Left ventricle myocardium inferior (tissue), 1 donor: ENCODE measurements at regions of chr10 and their contacts with region 1.

Region 1: DNA sequence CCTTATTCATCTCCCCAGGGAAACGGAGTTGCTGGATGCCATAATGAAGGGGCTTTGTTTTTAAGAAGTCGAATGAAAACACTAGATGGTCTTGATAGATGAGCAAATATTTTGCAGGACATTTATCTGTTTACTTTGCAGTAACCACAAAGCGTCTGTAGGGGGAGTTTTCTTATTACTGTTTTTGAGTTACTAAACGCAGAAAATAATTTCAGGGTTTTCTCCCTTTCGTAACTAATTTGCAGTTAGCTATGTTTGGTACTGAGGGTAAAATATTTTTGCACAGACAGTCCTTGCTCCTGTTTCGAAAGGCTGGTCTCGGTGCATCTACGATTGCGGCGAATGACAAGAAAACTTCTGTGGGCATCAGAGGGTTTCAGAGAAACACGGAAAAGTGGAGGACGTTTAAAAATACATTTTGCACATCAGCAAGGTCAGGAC is 505.6 kb upstream of the MKI67 start:
- DNase-seq: no peak
- H3K4me3 ChIP-seq: no peak overlapping the region
- H3K27ac ChIP-seq: no peak overlapping the region
- H3K4me1 ChIP-seq: no peaks in the 10 kb centered on the region
- H3K27me3 ChIP-seq: peaks cover 54% of the 10 kb centered on the region
- CTCF ChIP-seq: peak; percentile 75

Region 2: GRCh38 chr10:128859738-128860386 is 228.0 kb after region 1 on chr10:
- intact Hi-C with region 1: loop called (anchors 5 kb)
- DNase-seq: no peak
- H3K4me3 ChIP-seq: no peak overlapping the region
- H3K27ac ChIP-seq: no peak overlapping the region
- H3K4me1 ChIP-seq: peaks cover 16% of the 10 kb centered on the region
- H3K27me3 ChIP-seq: no peaks in the 10 kb centered on the region
- CTCF ChIP-seq: peak; percentile 68